ENCODE measurements at regions of chr19 and their contacts with region 1.

Region 1: DNA sequence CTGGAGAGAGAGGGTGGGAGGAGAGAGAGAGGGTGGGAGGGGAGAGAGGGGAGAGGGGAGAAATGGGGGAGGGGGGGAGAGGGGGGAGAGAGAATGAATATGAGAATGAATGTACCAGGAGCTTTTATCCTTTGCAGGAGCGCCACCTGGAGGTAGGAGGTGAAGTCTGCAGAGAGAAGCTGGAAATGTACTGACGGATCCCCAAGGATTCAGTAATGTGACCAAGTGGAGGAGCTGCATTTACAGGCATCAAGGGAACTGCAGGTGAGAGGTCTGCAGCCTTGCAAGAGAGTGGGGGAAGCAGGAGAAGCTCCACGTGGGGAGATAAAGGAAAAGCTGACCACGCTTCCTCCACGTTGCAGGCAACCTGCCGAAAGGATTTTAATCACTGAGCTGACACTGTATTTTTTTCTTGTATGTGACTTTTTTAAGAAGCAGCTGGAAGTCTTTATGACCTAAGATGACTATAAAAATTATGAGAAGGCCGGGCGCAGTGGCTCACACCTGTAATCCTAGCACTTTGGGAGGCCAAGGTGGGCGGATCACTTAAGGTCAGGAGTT is 33.7 kb downstream of the VSTM1 start:
- DNase-seq: peak; percentile 86
- H3K4me3 ChIP-seq: no peak overlapping the region
- H3K27ac ChIP-seq: no peak overlapping the region
- H3K4me1 ChIP-seq: no peaks in the 10 kb centered on the region
- H3K27me3 ChIP-seq: no peaks in the 10 kb centered on the region
- CTCF ChIP-seq: peak; percentile 77

Region 2: GRCh38 chr19:53792721-53793433 is 237.1 kb before region 1 on chr19:
- CTCF ChIA-PET with region 1: interaction called, 25 read pairs
- POLR2A ChIA-PET with region 1: no interaction called
- intact Hi-C with region 1: loop called (anchors 1 kb)
- DNase-seq: peak; percentile 92
- H3K4me3 ChIP-seq: no peak overlapping the region
- H3K27ac ChIP-seq: no peak overlapping the region
- H3K4me1 ChIP-seq: no peaks in the 10 kb centered on the region
- H3K27me3 ChIP-seq: no peaks in the 10 kb centered on the region
- CTCF ChIP-seq: peak; percentile 99

Region 3: DNA sequence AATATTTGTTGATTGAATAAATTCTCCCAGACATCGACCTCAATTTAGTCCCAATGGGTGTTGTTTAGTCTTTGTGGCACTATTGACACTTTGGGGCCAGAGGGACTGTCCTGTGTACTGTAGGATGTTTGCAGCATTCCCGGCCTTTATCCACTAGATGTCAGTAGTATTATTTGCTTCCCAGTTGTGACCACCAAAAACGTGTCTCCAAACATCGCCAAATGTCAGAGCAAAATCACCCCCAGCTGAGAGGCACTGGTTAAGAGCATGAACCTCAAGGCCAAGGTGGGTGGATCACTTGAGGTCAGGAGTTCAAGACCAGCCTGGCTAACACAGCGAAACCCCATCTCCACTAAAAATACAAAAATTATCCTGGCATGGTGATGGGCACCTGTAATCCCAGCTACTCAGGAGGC is 221.3 kb before region 1 on chr19:
- CTCF ChIA-PET with region 1: interaction called, 29 read pairs
- POLR2A ChIA-PET with region 1: no interaction called
- intact Hi-C with region 1: no loop called
- DNase-seq: peak; percentile 62
- H3K4me3 ChIP-seq: no peak overlapping the region
- H3K27ac ChIP-seq: no peak overlapping the region
- H3K4me1 ChIP-seq: no peaks in the 10 kb centered on the region
- H3K27me3 ChIP-seq: no peaks in the 10 kb centered on the region
- CTCF ChIP-seq: peak; percentile 64

Region 4: DNA sequence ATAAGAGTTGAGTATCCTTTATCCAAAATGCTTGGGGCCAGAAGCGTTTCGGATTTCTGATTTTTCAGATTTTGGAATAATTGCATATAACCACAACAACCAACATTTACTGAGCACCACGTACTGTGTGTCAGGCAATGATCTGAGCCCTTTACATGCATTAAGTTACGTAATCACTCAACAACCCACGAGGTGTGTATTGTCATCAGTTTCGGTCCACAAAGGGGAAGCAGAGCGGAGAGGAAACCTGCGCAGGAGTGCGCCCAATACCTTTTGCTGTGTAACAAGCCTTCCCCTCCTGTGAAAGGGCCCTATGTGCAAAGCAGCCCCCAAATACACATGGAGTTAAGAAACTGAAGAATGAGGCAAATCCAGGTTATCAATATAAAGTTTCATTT is 185.2 kb before region 1 on chr19:
- CTCF ChIA-PET with region 1: interaction called, 5 read pairs
- POLR2A ChIA-PET with region 1: no interaction called
- intact Hi-C with region 1: loop called (anchors 1 kb)
- DNase-seq: no peak
- H3K4me3 ChIP-seq: no peak overlapping the region
- H3K27ac ChIP-seq: no peak overlapping the region
- H3K4me1 ChIP-seq: peaks cover 7% of the 10 kb centered on the region
- H3K27me3 ChIP-seq: no peaks in the 10 kb centered on the region
- CTCF ChIP-seq: no peak

Region 5: DNA sequence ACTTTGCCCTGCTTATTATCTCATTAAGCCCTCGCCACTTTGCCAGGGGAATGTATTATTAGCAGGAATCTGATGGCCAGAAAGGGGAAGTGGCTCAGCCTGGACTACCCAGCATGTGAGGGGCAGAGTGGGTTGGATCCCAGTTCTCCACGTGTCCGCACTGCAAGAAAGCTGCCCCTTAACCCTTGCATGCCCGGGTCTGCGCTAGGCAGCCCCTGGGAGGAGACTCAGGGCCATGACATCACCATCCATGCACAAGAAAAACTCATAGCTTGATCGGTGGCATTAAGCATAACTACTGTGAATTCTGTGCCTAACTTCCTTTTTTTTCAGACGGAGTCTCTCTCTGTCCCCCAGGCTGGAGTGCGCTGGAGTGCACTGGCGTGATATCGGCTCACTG is 58.3 kb before region 1 on chr19:
- CTCF ChIA-PET with region 1: interaction called, 12 read pairs
- POLR2A ChIA-PET with region 1: no interaction called
- intact Hi-C with region 1: no loop called
- DNase-seq: no peak
- H3K4me3 ChIP-seq: no peak overlapping the region
- H3K27ac ChIP-seq: no peak overlapping the region
- H3K4me1 ChIP-seq: no peaks in the 10 kb centered on the region
- H3K27me3 ChIP-seq: no peaks in the 10 kb centered on the region
- CTCF ChIP-seq: no peak

Region 6: GRCh38 chr19:53982611-53983010 is 47.4 kb before region 1 on chr19:
- CTCF ChIA-PET with region 1: no interaction called
- POLR2A ChIA-PET with region 1: no interaction called
- intact Hi-C with region 1: no loop called
- DNase-seq: peak; percentile 61
- H3K4me3 ChIP-seq: peak overlapping the region; percentile 27
- H3K27ac ChIP-seq: no peak overlapping the region
- H3K4me1 ChIP-seq: peaks cover 21% of the 10 kb centered on the region
- H3K27me3 ChIP-seq: no peaks in the 10 kb centered on the region
- CTCF ChIP-seq: no peak